Ovary (tissue), 10 donors: ENCODE measurements at regions of chr5 and their contacts with region 1.

Region 1: DNA sequence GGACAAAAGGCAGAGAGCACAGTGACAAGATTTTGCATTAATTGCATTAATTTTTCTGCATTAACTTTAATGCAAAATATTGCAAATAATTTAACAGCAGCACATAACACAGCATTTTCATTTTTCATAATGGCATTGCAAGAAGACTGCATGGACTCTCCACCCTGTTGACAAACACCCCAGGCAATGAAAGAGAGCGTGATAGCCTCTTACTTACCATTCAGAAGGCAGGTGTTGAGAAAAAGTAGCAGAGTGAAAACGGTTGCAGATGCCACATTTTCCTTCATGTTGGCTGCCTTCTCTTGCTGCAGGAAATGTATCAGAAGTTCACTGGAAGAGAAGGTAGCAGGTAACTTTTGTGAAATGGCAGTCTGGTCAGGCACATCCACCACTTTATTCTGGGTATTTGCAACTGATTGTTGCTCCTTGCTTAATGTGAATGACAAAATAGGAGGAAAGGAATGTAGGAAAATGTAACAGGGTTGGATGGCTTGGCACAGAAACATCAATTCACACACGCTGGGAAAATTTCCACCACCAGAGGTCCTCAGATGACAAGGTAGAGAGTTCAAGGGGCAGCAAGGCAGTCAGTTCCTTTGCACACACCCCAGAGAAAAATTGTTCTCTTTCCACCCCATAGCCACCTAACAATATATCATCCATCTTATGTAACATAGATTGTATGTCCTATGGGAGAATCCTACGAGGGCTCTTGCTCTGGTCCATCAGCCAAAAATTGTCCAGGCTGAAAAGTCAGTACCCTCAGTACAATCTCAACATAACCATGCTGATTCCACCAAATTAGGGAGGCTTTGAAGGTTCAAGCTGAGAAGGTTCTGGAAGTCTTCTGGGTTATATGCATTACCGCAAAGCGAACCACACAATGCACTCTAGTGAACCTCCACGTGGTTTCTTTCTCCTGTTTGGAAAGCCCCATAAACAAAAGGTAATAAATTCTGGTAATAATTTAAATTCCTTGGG is 41.9 kb upstream of the AGXT2 start:
- DNase-seq: peak; percentile 23 to 65 (median 49)
- H3K4me3 ChIP-seq: no peak overlapping the region
- H3K27ac ChIP-seq: no peak overlapping the region
- H3K4me1 ChIP-seq: peaks cover 6% of the 10 kb centered on the region
- H3K27me3 ChIP-seq: no peaks in the 10 kb centered on the region
- CTCF ChIP-seq: peak; percentile 14 to 40 (median 24)
- EP300 ChIP-seq: no peak
- POLR2A ChIP-seq: no peak

Region 2: GRCh38 chr5:35041261-35041660 is 48.4 kb before region 1 on chr5:
- intact Hi-C with region 1: no loop called
- DNase-seq: no peak
- H3K4me3 ChIP-seq: no peak overlapping the region
- H3K27ac ChIP-seq: no peak overlapping the region
- H3K4me1 ChIP-seq: no peaks in the 10 kb centered on the region
- H3K27me3 ChIP-seq: no peaks in the 10 kb centered on the region
- CTCF ChIP-seq: no peak
- EP300 ChIP-seq: no peak
- POLR2A ChIP-seq: no peak

Region 3: DNA sequence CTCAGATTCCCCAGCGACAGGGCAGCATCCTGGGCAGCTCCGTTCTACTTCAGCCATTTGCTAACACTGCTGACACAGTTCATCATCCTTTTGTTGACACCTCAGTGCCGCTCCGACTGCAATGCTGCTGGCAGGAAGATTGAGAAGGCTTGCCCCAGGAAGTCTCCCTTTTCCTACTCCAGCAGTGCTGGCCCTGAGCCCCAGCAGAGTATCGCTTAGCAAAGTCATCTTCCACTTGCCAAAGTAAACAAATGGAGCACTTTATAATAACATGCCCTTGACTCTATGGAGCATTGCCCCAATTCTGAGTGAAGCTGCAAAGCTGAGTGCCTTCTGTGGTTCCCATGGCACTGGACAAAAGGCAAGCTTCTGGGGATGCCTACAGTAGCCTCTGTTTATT is 108.5 kb after region 1 on chr5:
- intact Hi-C with region 1: loop called in 1 of 4 experiments (anchors 10 kb)
- DNase-seq: peak; percentile 55 to 79 (median 61)
- H3K4me3 ChIP-seq: no peak overlapping the region
- H3K27ac ChIP-seq: no peak overlapping the region
- H3K4me1 ChIP-seq: peaks cover 6% of the 10 kb centered on the region
- H3K27me3 ChIP-seq: no peaks in the 10 kb centered on the region
- CTCF ChIP-seq: no peak
- EP300 ChIP-seq: no peak
- POLR2A ChIP-seq: no peak